HEK293 (cell line): ENCODE measurements at regions of chr9 and their contacts with region 1.

Region 1: DNA sequence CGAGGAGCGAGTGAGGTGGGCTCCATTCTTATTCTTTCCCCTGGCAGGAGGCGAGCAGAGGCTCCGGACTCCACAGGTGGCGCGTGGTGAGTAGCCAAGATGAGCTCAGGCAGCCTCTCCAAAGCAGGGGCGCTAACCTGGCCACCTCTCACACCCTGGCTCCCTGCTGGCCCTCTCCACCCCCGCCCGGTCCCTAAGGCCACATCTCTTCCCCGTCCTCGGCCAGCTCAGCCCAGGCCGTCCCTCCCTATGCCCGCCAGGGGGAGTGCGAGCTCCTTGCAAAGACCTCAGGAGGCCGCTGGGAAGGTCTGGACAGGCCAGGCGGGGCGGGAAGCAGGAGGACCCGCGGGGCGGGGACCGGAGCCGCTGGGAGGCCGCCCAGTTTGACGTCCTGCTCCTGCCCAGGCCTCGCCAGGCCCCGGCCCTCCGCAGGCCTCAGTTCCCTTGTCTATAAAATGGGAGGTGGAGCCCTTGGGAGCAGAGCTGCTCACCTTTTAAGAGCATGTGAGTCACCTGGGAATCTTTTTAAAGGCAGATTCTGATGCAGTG is 46.3 kb upstream of the GGTA1 start:
- H3K4me3 ChIP-seq: peak overlapping the region; percentile 21
- H3K27ac ChIP-seq: no peak overlapping the region
- H3K4me1 ChIP-seq: no peaks in the 10 kb centered on the region
- CTCF ChIP-seq: peak; percentile 87

Region 2: GRCh38 chr9:120916588-120916987 is 629.4 kb before region 1 on chr9:
- CTCF ChIA-PET with region 1: no interaction called
- POLR2A ChIA-PET with region 1: no interaction called
- H3K4me3 ChIP-seq: no peak overlapping the region
- H3K27ac ChIP-seq: no peak overlapping the region
- H3K4me1 ChIP-seq: no peaks in the 10 kb centered on the region
- CTCF ChIP-seq: no peak

Region 3: DNA sequence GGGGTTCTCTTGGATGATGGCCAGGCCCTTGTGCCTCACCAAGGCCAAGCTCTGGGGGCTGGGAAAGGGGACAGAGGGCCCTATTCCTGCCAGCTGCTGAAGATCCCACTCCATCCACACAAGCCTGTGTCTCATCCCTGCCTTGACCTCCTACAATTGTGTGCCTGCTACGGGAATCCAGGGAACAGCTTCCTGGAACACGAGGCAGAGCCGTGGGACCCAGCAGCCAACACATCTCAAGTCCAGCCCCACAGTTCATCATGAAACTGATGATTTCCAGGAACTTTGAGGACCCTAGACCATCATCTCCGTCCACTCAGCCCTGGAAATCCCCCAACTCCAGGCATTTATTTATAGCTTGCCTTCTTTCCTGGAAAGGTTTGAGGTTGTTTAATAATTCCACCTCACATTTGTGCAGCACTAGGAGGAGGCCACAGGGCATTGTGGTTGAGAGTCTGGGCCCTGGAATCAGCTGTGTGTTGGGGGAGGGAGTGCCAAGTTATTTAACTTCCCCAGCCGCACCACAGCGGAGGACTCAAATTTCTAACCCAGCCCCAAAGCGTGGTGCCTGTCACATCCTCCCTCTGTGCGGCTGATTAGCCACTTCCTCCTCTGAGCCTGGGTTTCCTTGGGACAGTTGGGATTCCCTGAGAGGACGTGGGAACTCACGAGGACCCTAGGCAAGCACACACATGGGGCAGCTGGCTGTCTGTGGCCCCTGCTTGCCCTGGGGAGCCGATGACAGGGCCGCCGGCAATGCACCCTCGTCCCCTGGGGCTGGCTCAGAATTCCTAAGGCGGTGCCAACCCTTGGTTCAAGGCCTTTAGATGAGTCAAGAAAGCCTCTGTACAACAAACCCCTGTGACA is 11.9 kb after region 1 on chr9:
- CTCF ChIA-PET with region 1: interaction called, 18 read pairs
- POLR2A ChIA-PET with region 1: interaction called, 3 read pairs
- H3K4me3 ChIP-seq: no peak overlapping the region
- H3K27ac ChIP-seq: no peak overlapping the region; the same call in 1 of the 2 replicates
- H3K4me1 ChIP-seq: peaks cover 2% of the 10 kb centered on the region; the same call in 1 of the 2 replicates
- CTCF ChIP-seq: no peak

Region 4: GRCh38 chr9:121573717-121574485 is 28.0 kb after region 1 on chr9:
- CTCF ChIA-PET with region 1: interaction called, 10 read pairs
- POLR2A ChIA-PET with region 1: interaction called, 3 read pairs
- H3K4me3 ChIP-seq: no peak overlapping the region
- H3K27ac ChIP-seq: no peak overlapping the region
- H3K4me1 ChIP-seq: no peaks in the 10 kb centered on the region
- CTCF ChIP-seq: no peak

Region 5: GRCh38 chr9:121609845-121610570 is 64.1 kb after region 1 on chr9:
- CTCF ChIA-PET with region 1: interaction called, 12 read pairs
- POLR2A ChIA-PET with region 1: interaction called, 3 read pairs
- H3K4me3 ChIP-seq: no peak overlapping the region
- H3K27ac ChIP-seq: no peak overlapping the region
- H3K4me1 ChIP-seq: peaks cover 4% of the 10 kb centered on the region; the same call in 1 of the 2 replicates
- CTCF ChIP-seq: no peak

Region 6: GRCh38 chr9:121992571-121993212 is 446.7 kb after region 1 on chr9:
- CTCF ChIA-PET with region 1: interaction called, 16 read pairs
- POLR2A ChIA-PET with region 1: interaction called, 3 read pairs
- H3K4me3 ChIP-seq: no peak overlapping the region
- H3K27ac ChIP-seq: no peak overlapping the region
- H3K4me1 ChIP-seq: no peaks in the 10 kb centered on the region
- CTCF ChIP-seq: no peak